ENCODE measurements at regions of chr1 and their contacts with region 1.

Region 1: DNA sequence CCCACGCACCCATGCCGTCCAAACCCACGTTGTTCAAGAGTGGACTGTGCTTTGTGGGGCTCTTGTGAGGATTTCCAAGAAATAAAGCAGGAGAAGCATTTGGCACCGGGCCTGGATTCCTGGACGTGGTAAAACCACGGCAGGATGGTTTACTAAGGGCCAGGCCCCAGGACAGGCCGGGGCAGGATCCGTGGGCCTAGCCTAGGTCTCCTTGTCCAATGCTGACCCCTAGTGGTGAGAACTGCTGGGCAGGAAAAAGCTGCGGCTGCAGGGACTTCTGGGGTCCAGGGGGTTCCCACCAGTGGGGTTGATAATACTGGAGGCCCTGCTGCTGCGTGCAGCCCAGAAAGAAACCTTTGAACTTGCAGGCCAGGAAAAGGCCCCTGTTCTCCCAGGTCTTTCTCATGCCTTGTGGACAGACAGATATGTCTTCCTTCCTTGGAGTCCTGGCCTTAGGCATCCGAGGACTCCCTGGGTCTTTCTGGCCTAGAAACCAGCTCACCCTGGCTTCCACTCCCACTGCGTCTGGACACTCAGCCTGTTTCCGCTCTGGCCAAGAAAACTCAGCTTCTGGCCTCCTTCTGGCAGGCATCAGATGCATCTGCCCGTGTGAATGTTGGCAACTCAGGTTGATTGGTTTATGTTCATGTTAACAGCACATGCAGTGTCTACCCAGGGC is 106.9 kb upstream of the TMEM51 start:
- DNase-seq: peak; percentile 59
- H3K4me3 ChIP-seq: no peak overlapping the region
- H3K27ac ChIP-seq: no peak overlapping the region
- H3K4me1 ChIP-seq: no peaks in the 10 kb centered on the region
- H3K27me3 ChIP-seq: no peaks in the 10 kb centered on the region
- CTCF ChIP-seq: peak; percentile 79 to 92
- POLR2A ChIP-seq: no peak

Region 2: GRCh38 chr1:13432251-13432650 is 1614.4 kb before region 1 on chr1:
- CTCF ChIA-PET with region 1: no interaction called
- POLR2A ChIA-PET with region 1: no interaction called
- dilution Hi-C with region 1: no loop called
- intact Hi-C with region 1: no loop called
- DNase-seq: no peak
- H3K4me3 ChIP-seq: no peak overlapping the region
- H3K27ac ChIP-seq: no peak overlapping the region
- H3K4me1 ChIP-seq: no peaks in the 10 kb centered on the region
- H3K27me3 ChIP-seq: no peaks in the 10 kb centered on the region
- CTCF ChIP-seq: no peak
- POLR2A ChIP-seq: no peak

Region 3: DNA sequence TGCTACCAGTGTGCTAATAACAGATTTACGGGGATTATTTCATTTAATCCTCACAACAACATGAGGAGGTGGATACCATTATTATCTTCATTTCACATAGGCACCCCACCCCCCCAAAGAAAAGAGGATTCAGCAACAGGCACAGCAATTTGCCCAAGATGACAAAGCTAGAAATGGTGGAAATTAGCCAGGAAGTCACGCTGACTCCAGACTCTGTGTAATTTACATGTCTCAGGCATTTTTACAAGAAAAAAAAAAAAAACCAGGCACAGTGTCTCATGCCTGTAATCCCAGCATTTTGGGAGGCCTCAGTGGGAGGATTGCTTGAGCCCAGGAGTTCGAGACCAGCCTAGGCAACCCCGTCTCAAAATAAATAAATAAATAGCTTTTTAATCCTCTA is 1384.1 kb before region 1 on chr1:
- CTCF ChIA-PET with region 1: interaction called, 21 read pairs
- POLR2A ChIA-PET with region 1: no interaction called
- dilution Hi-C with region 1: no loop called
- intact Hi-C with region 1: no loop called
- DNase-seq: no peak
- H3K4me3 ChIP-seq: no peak overlapping the region
- H3K27ac ChIP-seq: no peak overlapping the region
- H3K4me1 ChIP-seq: no peaks in the 10 kb centered on the region
- H3K27me3 ChIP-seq: no peaks in the 10 kb centered on the region
- CTCF ChIP-seq: no peak
- POLR2A ChIP-seq: no peak

Region 4: DNA sequence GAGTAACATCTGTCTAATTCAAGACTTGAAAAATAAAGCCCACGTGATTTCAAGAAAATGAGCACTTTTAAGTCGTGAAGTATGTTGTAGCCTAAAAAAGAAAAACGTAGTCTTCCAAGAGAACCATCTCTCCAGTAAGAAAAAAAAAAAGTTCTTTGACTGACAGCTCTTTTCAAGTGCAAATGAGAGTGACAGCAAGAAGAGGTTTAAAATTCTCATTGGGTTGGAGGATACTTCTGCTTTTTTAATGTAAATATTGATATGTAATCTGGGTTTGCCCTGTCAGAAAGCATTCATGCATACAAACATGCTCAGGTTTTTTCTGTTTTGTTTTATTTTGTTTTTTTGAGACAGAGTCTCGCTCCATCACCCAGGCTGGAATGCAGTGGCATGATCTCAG is 1378.9 kb before region 1 on chr1:
- CTCF ChIA-PET with region 1: interaction called, 21 read pairs
- POLR2A ChIA-PET with region 1: no interaction called
- dilution Hi-C with region 1: no loop called
- intact Hi-C with region 1: no loop called
- DNase-seq: no peak
- H3K4me3 ChIP-seq: no peak overlapping the region
- H3K27ac ChIP-seq: no peak overlapping the region
- H3K4me1 ChIP-seq: no peaks in the 10 kb centered on the region
- H3K27me3 ChIP-seq: no peaks in the 10 kb centered on the region
- CTCF ChIP-seq: no peak
- POLR2A ChIP-seq: no peak

Region 5: DNA sequence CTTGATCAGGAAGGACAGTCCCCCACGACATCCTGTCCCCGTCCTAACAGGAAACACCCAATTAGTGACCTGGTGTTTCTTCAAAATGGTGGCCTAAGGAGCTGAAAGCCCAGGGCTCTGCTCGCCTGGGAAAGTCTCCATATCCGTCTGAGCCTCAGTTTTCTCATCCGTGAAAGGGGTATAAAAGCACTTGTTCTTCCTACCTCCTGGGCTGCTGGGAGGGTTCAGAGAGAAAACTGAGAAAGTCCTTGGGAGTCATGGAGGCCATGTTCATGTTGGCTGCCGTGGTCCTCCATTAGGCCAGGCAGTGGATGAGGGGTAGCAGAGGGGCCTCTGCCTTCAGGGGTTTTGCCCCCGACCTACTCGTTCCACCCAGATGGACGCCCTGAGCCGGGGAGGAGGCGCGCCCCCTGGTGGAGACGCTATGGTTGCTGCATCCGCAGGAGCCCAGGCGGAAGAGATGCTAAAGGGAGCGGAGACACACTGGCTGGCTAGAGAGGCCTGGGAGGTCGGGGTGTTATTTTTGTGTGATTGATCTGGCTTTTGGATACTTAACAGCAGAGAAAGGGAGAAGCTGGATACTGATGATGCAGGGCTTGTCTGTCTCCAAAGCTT is 1233.1 kb before region 1 on chr1:
- CTCF ChIA-PET with region 1: no interaction called
- POLR2A ChIA-PET with region 1: no interaction called
- dilution Hi-C with region 1: no loop called
- intact Hi-C with region 1: loop called (anchors 5 kb)
- DNase-seq: peak; percentile 4
- H3K4me3 ChIP-seq: no peak overlapping the region
- H3K27ac ChIP-seq: no peak overlapping the region
- H3K4me1 ChIP-seq: no peaks in the 10 kb centered on the region
- H3K27me3 ChIP-seq: no peaks in the 10 kb centered on the region
- CTCF ChIP-seq: peak; percentile 58 to 66
- POLR2A ChIP-seq: no peak

Region 6: GRCh38 chr1:13965770-13966398 is 1080.7 kb before region 1 on chr1:
- CTCF ChIA-PET with region 1: interaction called, 5 read pairs
- POLR2A ChIA-PET with region 1: no interaction called
- dilution Hi-C with region 1: no loop called
- intact Hi-C with region 1: loop called (anchors 1 kb)
- DNase-seq: no peak
- H3K4me3 ChIP-seq: no peak overlapping the region
- H3K27ac ChIP-seq: no peak overlapping the region
- H3K4me1 ChIP-seq: no peaks in the 10 kb centered on the region
- H3K27me3 ChIP-seq: no peaks in the 10 kb centered on the region
- CTCF ChIP-seq: no peak
- POLR2A ChIP-seq: no peak

Region 7: DNA sequence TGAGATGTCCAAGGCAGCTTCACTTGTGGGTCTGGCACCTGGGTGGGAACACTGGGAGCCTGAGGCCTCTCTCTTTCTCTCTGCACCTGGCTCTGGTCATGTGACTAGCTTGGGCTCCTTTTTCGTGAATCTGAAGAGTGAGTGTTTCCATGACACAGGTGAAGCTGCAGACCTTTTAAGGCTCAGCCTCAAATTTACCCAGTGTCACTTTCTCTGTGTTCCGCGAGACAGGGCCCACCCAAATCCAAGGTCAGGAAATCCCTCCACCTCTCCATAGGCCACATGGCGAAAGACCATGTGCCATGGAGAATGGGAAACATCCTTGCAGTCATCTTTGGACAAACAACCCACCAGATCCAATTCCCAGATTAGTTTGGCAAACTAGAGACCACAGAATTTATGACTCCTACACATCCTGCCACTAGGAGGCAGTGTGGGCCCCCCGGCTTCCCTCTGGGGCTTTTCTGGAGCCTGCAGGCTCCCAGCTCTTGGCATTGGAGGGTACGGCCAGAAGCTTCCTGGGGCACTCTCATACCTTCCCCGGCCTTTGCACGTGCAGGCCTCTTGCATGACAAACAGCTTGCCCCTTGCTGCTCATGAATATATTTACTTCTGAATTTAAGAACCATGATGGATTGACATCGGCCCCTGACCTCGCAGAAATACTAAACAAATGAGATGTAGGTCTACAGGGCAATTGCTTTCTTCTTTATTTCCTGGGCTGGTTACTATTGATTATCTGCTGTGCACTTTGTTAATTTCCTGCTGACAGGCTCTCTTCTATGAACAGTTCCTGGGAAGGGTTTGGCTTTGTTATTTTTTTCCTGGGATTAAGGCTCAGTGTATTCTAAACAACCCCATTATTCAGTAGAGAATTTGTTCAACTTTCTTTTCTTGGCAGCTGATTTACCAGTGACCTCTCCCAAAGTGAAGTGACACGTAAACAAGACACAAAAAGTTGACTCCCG is 267.4 kb before region 1 on chr1:
- CTCF ChIA-PET with region 1: interaction called, 3 read pairs
- POLR2A ChIA-PET with region 1: no interaction called
- dilution Hi-C with region 1: no loop called
- intact Hi-C with region 1: loop called (anchors 1 kb)
- DNase-seq: no peak
- H3K4me3 ChIP-seq: no peak overlapping the region
- H3K27ac ChIP-seq: no peak overlapping the region
- H3K4me1 ChIP-seq: no peaks in the 10 kb centered on the region
- H3K27me3 ChIP-seq: no peaks in the 10 kb centered on the region
- CTCF ChIP-seq: peak; percentile 44 to 50
- POLR2A ChIP-seq: no peak

Region 8: GRCh38 chr1:14929547-14930246 is 116.9 kb before region 1 on chr1:
- CTCF ChIA-PET with region 1: no interaction called
- POLR2A ChIA-PET with region 1: no interaction called
- dilution Hi-C with region 1: no loop called
- intact Hi-C with region 1: no loop called
- DNase-seq: no peak
- H3K4me3 ChIP-seq: no peak overlapping the region
- H3K27ac ChIP-seq: no peak overlapping the region
- H3K4me1 ChIP-seq: peaks cover 5% of the 10 kb centered on the region
- H3K27me3 ChIP-seq: peaks cover 8 to 14% of the 10 kb centered on the region in 2 experiments
- CTCF ChIP-seq: no peak
- POLR2A ChIP-seq: no peak

Region 9: DNA sequence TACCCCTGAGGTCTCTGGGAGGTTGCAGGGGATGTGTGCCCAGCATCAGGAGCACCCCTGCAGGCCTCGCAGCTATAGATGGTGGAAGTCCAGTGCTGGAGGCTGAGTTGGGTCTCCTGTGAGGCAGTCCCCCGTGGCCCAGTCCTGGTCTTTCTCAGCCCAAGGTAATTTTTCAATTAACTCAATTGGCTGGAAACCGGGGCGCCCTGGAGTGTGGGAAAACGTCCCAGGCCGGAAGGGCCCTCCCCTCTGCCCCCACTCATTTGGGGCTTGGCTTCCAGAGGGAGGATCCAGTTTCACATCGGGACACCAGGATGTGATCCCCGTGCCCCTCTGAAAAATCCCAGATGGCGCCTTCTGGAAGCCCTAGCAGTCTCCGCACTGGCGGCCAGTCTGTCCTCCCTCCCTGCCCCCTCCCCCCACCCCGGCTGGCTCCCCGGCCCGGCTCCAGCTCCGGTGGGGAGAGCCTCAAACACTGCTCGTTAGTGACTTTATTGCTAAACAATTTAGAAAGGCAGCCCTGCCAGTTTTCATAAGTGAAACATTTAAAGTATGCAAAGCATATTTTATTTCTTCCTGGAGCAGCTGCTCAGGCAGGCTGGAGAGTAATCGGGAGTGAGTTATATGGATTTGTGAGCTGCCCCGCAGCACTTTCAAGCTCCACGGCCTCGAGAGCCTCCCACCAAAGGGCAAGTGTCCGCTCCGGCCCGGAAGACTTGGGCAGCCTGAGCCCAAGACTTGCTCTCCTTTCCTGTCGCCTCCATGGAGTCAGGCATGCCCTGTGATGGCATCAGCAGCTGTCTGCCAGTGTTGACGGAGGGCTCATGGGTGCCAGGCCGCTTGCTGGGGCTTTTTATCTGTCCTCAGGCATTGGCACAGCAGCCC is 101.3 kb before region 1 on chr1:
- CTCF ChIA-PET with region 1: no interaction called
- POLR2A ChIA-PET with region 1: no interaction called
- dilution Hi-C with region 1: no loop called
- intact Hi-C with region 1: no loop called
- DNase-seq: peak; percentile 37
- H3K4me3 ChIP-seq: no peak overlapping the region
- H3K27ac ChIP-seq: no peak overlapping the region
- H3K4me1 ChIP-seq: peaks cover 8% of the 10 kb centered on the region
- H3K27me3 ChIP-seq: no peaks in the 10 kb centered on the region
- CTCF ChIP-seq: no peak
- POLR2A ChIP-seq: no peak

Region 10: DNA sequence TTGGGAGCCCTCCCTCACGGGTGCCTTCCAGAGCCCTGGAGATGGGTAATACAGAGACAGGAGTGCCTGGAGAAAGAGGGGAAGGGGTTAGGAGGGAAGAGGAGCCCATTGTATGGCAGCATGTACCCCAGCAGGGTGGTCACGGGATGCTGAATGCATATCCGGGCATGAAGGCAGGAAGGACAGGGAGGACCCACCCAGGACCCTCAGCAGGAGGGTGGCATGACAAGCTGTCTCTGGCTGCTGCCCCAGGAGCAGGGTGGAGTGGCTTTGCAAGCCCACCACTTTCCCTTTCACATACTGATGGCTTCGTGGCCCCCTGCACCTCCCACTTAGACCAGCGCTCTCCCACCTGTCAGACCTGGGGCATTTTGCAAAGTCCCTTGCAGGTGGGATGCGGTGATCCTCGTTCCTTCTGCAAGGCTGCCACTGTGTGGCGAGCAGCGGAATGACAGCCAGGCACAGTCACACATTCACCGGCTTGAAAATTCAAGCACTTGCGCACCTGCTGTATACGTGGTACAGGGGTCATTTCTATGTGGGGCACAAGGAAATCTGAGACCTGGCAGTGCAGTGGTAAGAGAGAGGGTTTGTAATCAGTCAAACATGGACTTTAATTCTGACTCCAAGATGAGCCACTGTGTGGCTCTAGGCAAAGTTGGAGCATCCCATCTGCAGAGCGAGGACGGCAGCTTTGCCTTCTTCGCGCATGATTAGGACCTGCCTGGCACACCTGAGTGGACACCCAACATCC is 53.7 kb after region 1 on chr1:
- CTCF ChIA-PET with region 1: interaction called, 3 read pairs
- POLR2A ChIA-PET with region 1: no interaction called
- dilution Hi-C with region 1: no loop called
- intact Hi-C with region 1: loop called (anchors 1 kb)
- DNase-seq: peak; percentile 56
- H3K4me3 ChIP-seq: no peak overlapping the region
- H3K27ac ChIP-seq: no peak overlapping the region
- H3K4me1 ChIP-seq: no peaks in the 10 kb centered on the region
- H3K27me3 ChIP-seq: no peaks in the 10 kb centered on the region
- CTCF ChIP-seq: peak; percentile 86 to 88
- POLR2A ChIP-seq: no peak

Region 11: GRCh38 chr1:15128520-15129313 is 82.1 kb after region 1 on chr1:
- CTCF ChIA-PET with region 1: no interaction called
- POLR2A ChIA-PET with region 1: no interaction called
- dilution Hi-C with region 1: no loop called
- intact Hi-C with region 1: no loop called
- DNase-seq: peak; percentile 78
- H3K4me3 ChIP-seq: no peak overlapping the region
- H3K27ac ChIP-seq: no peak overlapping the region
- H3K4me1 ChIP-seq: no peaks in the 10 kb centered on the region
- H3K27me3 ChIP-seq: no peaks in the 10 kb centered on the region
- CTCF ChIP-seq: peak; percentile 92
- POLR2A ChIP-seq: no peak